ENCODE measurements at regions of chr6 and their contacts with region 1.

Region 1: DNA sequence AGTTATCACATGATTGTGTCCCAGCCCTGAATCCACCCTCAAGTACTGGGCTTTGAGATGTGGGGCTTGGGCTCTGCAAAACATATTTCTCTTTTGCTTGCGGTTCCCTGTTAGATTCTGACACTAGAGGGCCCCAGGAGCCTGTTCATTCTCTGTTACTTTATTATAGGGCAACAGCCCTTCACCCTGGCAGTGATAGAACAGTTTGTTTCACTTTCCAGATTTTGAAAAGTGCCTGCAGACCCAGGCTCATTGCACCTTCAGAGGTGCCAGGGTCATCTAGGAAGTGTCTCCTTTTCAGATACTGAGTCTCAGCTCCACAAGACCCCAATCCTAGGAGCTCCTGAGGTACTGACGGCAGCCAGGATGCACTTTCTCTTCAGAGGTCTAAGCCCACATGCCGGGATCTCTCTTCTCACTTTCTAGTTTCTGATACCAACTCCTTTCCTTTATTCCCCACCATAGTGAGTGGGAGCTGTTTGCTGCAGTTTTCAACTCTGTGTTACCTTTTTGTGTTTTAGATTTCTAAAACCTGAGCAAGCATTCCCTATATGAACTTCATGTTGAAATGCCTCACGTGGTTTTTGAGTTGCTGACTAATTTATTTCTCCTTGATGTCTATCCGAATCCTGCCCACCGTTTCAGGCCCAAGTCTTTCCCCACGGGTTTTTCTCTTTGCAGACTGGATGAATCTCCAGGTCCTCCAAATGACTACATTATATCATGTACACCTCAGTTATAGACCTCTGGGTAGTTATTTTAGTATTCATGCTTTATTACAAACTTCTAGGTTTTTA is 10.9 kb downstream of the ABT1 start:
- DNase-seq: peak; percentile 43
- H3K4me3 ChIP-seq: peak overlapping the region in 2 of 3 experiments; percentile 16 to 22
- H3K27ac ChIP-seq: no peak overlapping the region
- H3K4me1 ChIP-seq: no peaks in the 10 kb centered on the region
- H3K27me3 ChIP-seq: no peaks in the 10 kb centered on the region
- CTCF ChIP-seq: peak; percentile 65 to 85

Region 2: GRCh38 chr6:26234421-26235296 is 373.0 kb before region 1 on chr6:
- CTCF ChIA-PET with region 1: no interaction called
- dilution Hi-C with region 1: no loop called
- in situ Hi-C with region 1: no loop called
- intact Hi-C with region 1: no loop called
- DNase-seq: peak; percentile 85
- H3K4me3 ChIP-seq: peak overlapping the region; percentile 45 to 51 (median 47)
- H3K27ac ChIP-seq: peak overlapping the region; percentile 69
- H3K4me1 ChIP-seq: peaks cover 3% of the 10 kb centered on the region
- H3K27me3 ChIP-seq: no peaks in the 10 kb centered on the region
- CTCF ChIP-seq: no peak

Region 3: DNA sequence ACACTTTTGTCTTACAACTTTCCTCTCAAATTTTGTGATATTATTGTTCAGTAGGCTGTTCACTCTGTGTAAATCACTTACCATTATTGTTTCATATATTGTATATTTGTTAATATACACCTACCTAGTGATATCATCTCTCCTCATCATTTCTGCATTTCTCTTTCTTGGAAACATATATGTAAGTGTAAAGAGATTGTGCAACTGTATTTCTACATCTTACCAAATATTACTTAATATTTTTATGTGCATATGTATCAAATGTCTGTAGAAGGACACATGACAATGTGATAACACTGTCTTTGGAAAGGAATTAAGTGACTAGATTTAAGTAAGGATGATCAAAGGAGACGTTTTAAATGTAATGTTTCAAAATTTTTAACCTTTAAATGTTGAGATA is 21.7 kb after region 1 on chr6:
- CTCF ChIA-PET with region 1: no interaction called
- dilution Hi-C with region 1: no loop called
- in situ Hi-C with region 1: no loop called
- intact Hi-C with region 1: no loop called
- DNase-seq: no peak
- H3K4me3 ChIP-seq: no peak overlapping the region
- H3K27ac ChIP-seq: no peak overlapping the region
- H3K4me1 ChIP-seq: no peaks in the 10 kb centered on the region
- H3K27me3 ChIP-seq: no peaks in the 10 kb centered on the region
- CTCF ChIP-seq: no peak

Region 4: GRCh38 chr6:27078734-27079357 is 471.2 kb after region 1 on chr6:
- CTCF ChIA-PET with region 1: no interaction called
- dilution Hi-C with region 1: no loop called
- in situ Hi-C with region 1: loop called in 1 of 2 experiments (anchors 5 kb)
- intact Hi-C with region 1: loop called (anchors 1 kb)
- DNase-seq: peak; percentile 58
- H3K4me3 ChIP-seq: peak overlapping the region; percentile 49 to 55 (median 52)
- H3K27ac ChIP-seq: no peak overlapping the region
- H3K4me1 ChIP-seq: peaks cover 4% of the 10 kb centered on the region
- H3K27me3 ChIP-seq: no peaks in the 10 kb centered on the region
- CTCF ChIP-seq: peak; percentile 69 to 81

Region 5: GRCh38 chr6:27091661-27092646 is 484.3 kb after region 1 on chr6:
- CTCF ChIA-PET with region 1: no interaction called
- dilution Hi-C with region 1: no loop called
- in situ Hi-C with region 1: loop called in 1 of 2 experiments (anchors 5 kb)
- intact Hi-C with region 1: no loop called
- DNase-seq: peak; percentile 88
- H3K4me3 ChIP-seq: peak overlapping the region; percentile 39 to 58 (median 53)
- H3K27ac ChIP-seq: peak overlapping the region; percentile 23
- H3K4me1 ChIP-seq: peaks cover 17% of the 10 kb centered on the region
- H3K27me3 ChIP-seq: no peaks in the 10 kb centered on the region
- CTCF ChIP-seq: no peak

Region 6: GRCh38 chr6:27126815-27127537 is 519.3 kb after region 1 on chr6:
- CTCF ChIA-PET with region 1: no interaction called
- dilution Hi-C with region 1: no loop called
- in situ Hi-C with region 1: no loop called
- intact Hi-C with region 1: loop called (anchors 1 kb)
- DNase-seq: peak; percentile 87
- H3K4me3 ChIP-seq: peak overlapping the region; percentile 37 to 59 (median 39)
- H3K27ac ChIP-seq: no peak overlapping the region
- H3K4me1 ChIP-seq: peaks cover 12% of the 10 kb centered on the region
- H3K27me3 ChIP-seq: no peaks in the 10 kb centered on the region
- CTCF ChIP-seq: peak; percentile 83

Region 7: GRCh38 chr6:27795697-27796494 is 1188.3 kb after region 1 on chr6:
- CTCF ChIA-PET with region 1: no interaction called
- dilution Hi-C with region 1: no loop called
- in situ Hi-C with region 1: no loop called
- intact Hi-C with region 1: loop called (anchors 5 kb)
- DNase-seq: peak; percentile 83
- H3K4me3 ChIP-seq: no peak overlapping the region
- H3K27ac ChIP-seq: no peak overlapping the region
- H3K4me1 ChIP-seq: peaks cover 8% of the 10 kb centered on the region
- H3K27me3 ChIP-seq: no peaks in the 10 kb centered on the region
- CTCF ChIP-seq: peak; percentile 74 to 87